MCF 10A (cell line): ENCODE measurements at regions of chr1 and their contacts with region 1.

Region 1: GRCh38 chr1:63189677-63190076 is 132.7 kb upstream of the FOXD3 start:
- DNase-seq: peak; percentile 50
- H3K4me3 Mint-ChIP-seq: no peak overlapping the region
- H3K27ac Mint-ChIP-seq: no peak overlapping the region
- H3K4me1 Mint-ChIP-seq: no peaks in the 10 kb centered on the region
- H3K27me3 Mint-ChIP-seq: no peaks in the 10 kb centered on the region
- CTCF ChIP-seq: peak; percentile 17

Region 2: DNA sequence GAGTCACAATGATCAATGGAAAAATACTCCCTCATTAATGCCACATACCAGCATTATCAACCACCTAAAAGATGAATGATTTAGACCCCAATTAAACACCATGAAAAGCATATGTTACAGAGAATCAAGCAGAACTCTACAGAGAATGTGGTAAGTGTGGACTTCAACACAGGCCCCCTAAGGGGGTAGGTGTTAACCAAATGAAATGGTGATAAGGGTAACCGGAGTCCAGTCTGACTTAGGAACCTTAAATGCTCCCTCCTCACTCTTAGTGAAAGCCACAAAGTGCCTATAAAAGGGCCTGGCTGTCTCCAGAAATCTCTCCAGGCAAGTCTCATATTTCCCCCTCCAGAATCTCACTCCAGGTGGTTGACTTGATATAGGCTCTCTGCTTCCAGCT is 16.5 kb before region 1 on chr1:
- CTCF ChIA-PET with region 1: interaction called, 10 read pairs
- POLR2A ChIA-PET with region 1: no interaction called
- intact Hi-C with region 1: no loop called
- DNase-seq: no peak
- H3K4me3 Mint-ChIP-seq: no peak overlapping the region
- H3K27ac Mint-ChIP-seq: no peak overlapping the region
- H3K4me1 Mint-ChIP-seq: no peaks in the 10 kb centered on the region
- H3K27me3 Mint-ChIP-seq: peaks cover 60% of the 10 kb centered on the region
- CTCF ChIP-seq: no peak

Region 3: GRCh38 chr1:63350320-63350719 is 160.6 kb after region 1 on chr1:
- CTCF ChIA-PET with region 1: no interaction called
- POLR2A ChIA-PET with region 1: no interaction called
- intact Hi-C with region 1: loop called (anchors 10 kb)
- DNase-seq: no peak
- H3K4me3 Mint-ChIP-seq: no peak overlapping the region
- H3K27ac Mint-ChIP-seq: no peak overlapping the region
- H3K4me1 Mint-ChIP-seq: no peaks in the 10 kb centered on the region
- H3K27me3 Mint-ChIP-seq: peaks cover 24% of the 10 kb centered on the region
- CTCF ChIP-seq: no peak